ENCODE measurements at regions of chr9 and their contacts with region 1.

Region 1: DNA sequence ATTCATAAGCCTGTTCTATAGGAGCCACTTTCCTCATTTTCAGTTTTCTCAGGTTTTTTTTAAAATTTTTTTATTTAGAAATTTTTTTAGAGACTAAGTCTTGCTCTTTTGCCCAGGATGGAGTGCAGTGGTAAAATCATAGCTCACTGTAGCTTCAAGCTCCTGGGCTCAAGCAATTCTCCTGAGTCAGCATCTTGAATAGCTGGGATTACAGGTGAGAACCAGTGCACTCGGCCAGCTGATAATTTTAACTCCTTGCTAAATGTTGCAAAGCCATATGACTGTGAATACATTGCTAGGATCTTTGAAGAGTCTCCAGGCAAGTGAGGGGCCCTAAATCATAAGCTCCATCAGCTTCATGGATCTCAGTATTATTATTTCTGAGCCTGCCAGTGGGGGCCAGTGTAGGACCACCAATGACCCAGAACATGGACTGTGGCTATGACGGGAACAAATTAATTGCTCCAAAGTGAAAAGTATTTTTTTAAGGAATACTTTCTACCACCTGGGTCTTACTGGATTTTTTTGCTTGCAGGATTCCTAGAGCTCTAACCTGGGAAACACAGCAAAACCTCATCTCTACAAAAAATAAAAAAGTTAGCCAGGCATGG is 5.7 kb upstream of the GAPVD1 start:
- DNase-seq: peak; percentile 47
- H3K4me3 Mint-ChIP-seq: no peak overlapping the region
- H3K27ac Mint-ChIP-seq: no peak overlapping the region
- H3K4me1 Mint-ChIP-seq: peaks cover 5% of the 10 kb centered on the region
- H3K27me3 Mint-ChIP-seq: no peaks in the 10 kb centered on the region
- CTCF ChIP-seq: no peak

Region 2: DNA sequence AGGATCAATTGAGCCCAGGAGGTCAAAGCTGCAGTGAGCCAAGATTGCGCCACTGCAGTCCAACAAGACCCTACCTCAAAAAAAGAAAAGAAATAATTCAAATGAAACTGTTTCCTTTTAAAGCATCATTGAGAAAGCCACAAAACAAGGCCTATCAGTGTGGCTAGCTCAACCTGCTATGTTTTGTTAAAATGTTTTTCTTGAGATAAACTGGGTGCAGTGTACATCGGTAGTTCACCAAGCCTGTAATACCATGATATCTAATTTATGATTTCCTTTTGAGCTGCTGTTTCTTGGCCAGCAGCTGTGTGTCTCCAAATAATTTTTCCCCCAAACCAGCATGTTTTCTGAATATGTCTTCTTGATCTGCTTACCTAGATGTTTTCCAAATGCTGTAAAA is 217.7 kb before region 1 on chr9:
- CTCF ChIA-PET with region 1: no interaction called
- intact Hi-C with region 1: no loop called
- DNase-seq: no peak
- H3K4me3 Mint-ChIP-seq: no peak overlapping the region
- H3K27ac Mint-ChIP-seq: no peak overlapping the region
- H3K4me1 Mint-ChIP-seq: no peaks in the 10 kb centered on the region
- H3K27me3 Mint-ChIP-seq: no peaks in the 10 kb centered on the region
- CTCF ChIP-seq: no peak

Region 3: DNA sequence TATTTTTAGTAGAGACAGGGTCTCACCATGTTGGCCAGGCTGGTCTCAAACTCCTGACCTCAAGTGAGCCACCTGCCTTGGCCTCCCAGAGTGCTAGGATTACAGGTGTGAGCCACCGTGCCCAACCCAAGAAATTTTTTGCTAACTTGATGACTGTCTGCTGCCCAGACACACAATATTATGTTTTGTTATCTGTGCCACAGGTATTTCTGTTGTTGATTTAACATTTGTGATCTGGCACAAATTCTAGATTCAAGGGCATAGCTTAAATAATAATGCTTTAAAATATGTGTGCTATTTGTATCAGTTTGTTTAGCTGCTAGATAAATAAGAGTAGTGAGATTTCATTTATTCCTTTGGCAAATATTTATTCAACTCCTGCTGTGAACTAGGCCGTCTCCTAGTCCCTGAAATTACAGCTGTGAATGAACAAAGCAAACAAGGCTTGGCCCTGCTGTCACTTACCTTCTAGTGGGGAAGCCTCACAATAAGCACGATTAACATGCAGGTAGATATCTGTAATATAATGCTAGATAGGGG is 41.0 kb after region 1 on chr9:
- CTCF ChIA-PET with region 1: no interaction called
- intact Hi-C with region 1: loop called (anchors 1 kb)
- DNase-seq: peak; percentile 53
- H3K4me3 Mint-ChIP-seq: no peak overlapping the region
- H3K27ac Mint-ChIP-seq: peak overlapping the region; percentile 76
- H3K4me1 Mint-ChIP-seq: peaks cover 12% of the 10 kb centered on the region
- H3K27me3 Mint-ChIP-seq: no peaks in the 10 kb centered on the region
- CTCF ChIP-seq: no peak

Region 4: GRCh38 chr9:125361837-125362531 is 106.1 kb after region 1 on chr9:
- CTCF ChIA-PET with region 1: interaction called, 21 read pairs
- intact Hi-C with region 1: no loop called
- DNase-seq: no peak
- H3K4me3 Mint-ChIP-seq: no peak overlapping the region
- H3K27ac Mint-ChIP-seq: no peak overlapping the region
- H3K4me1 Mint-ChIP-seq: no peaks in the 10 kb centered on the region
- H3K27me3 Mint-ChIP-seq: no peaks in the 10 kb centered on the region
- CTCF ChIP-seq: no peak

Region 5: DNA sequence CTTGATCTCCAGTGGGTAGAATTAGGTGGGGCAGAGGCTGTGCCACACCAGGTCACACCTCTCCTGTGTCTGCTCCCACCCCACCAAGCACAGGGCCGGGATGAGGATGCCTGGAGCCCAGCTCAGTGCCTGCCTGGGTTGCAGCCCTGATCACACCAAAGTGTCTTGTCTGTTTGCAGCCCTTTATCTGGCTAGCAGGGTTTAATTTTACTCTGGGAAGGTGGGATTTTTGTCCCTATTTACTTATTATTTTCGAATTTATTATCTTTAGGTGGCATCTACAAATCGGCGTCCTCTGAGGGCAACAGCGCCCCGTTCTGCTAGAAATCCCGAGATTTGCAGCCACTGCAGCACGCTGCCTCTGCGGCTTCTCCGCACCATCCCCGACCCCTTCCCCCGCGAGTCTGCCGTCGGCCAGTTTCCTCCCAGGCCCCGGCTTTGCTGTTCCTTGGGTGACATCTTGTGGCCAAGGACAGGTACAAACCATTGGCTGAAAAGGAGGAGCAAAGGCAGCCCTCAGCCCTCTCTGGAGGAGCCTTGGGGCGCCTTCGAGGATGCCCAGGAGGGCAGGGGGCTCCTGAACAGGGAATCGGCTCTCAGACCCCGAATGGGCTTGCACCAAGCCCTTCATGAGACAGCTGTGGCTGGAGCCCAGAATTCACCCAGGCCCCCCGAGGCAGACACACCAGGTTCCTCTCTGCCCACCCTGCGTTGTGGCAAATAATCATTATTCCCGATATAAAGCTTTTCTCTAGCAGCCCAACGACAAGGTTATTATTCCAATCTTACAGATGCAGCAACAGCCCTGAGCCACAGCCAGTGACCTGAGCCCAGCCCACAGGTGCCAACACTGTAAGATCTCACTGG is 118.8 kb after region 1 on chr9:
- CTCF ChIA-PET with region 1: interaction called, 3 read pairs
- intact Hi-C with region 1: loop called (anchors 5 kb)
- DNase-seq: peak; percentile 66
- H3K4me3 Mint-ChIP-seq: peak overlapping the region; percentile 24
- H3K27ac Mint-ChIP-seq: no peak overlapping the region
- H3K4me1 Mint-ChIP-seq: no peaks in the 10 kb centered on the region
- H3K27me3 Mint-ChIP-seq: no peaks in the 10 kb centered on the region
- CTCF ChIP-seq: peak; percentile 66

Measured in Calu3 (cell line).